Panc1 (cell line): ENCODE measurements at regions of chr17 and their contacts with region 1.

Region 1: GRCh38 chr17:73872816-73873215 is 228.6 kb upstream of the SDK2 start:
- DNase-seq: no peak
- ATAC-seq: no peak
- H3K4me3 ChIP-seq: no peak overlapping the region
- H3K27ac ChIP-seq: no peak overlapping the region
- H3K4me1 ChIP-seq: no peaks in the 10 kb centered on the region
- H3K27me3 ChIP-seq: no peaks in the 10 kb centered on the region; the same call in 1 of the 2 replicates
- CTCF ChIP-seq: no peak

Region 2: GRCh38 chr17:73639932-73640331 is 232.9 kb before region 1 on chr17:
- CTCF ChIA-PET with region 1: no interaction called
- POLR2A ChIA-PET with region 1: interaction called, 10 read pairs
- in situ Hi-C with region 1: no loop called
- intact Hi-C with region 1: no loop called
- DNase-seq: no peak
- ATAC-seq: no peak
- H3K4me3 ChIP-seq: no peak overlapping the region
- H3K27ac ChIP-seq: no peak overlapping the region
- H3K4me1 ChIP-seq: peaks cover 6% of the 10 kb centered on the region
- H3K27me3 ChIP-seq: peaks cover 10% of the 10 kb centered on the region
- CTCF ChIP-seq: no peak